ENCODE measurements at regions of chr3 and their contacts with region 1.

Region 1: DNA sequence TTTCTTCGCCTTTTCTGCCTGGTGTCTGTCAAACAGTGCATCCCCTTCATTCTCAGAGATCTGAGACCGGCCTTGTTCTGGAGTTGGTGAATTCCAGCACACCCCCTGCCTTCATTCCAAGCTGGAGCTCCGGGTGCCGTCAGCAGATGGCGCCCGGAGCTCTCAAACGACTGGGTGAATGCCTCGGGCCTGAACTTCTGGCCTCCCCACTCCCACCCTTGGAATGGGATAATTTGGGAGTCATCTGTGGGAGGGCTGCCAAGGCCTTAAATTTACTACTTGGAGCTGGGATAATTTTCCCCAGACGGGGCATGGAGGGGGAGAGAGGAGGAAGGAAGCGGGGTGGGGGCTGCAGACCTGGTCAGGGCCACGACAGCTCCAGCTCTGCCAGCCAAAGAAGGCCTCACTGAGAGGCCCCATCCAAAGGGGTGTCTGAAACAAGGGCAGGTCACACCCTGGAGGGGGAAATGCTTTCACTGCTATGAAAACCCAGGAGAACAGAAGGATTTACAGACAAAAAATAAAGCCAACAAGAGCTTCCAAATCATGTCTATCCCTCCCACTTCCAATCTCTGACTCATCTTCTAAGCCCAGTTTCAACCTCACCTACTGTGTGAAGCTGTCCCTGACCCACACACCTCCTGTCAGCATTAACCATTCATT is 187.9 kb downstream of the OPA1 start:
- DNase-seq: peak; percentile 80 to 87
- H3K4me3 ChIP-seq: no peak overlapping the region
- H3K4me3 Mint-ChIP-seq: peak overlapping the region; percentile 4
- H3K27ac Mint-ChIP-seq: peak overlapping the region; percentile 98
- H3K4me1 ChIP-seq: peaks cover 76% of the 10 kb centered on the region
- H3K4me1 Mint-ChIP-seq: peaks cover 63% of the 10 kb centered on the region
- H3K27me3 ChIP-seq: no peaks in the 10 kb centered on the region
- H3K27me3 Mint-ChIP-seq: no peaks in the 10 kb centered on the region
- CTCF ChIP-seq: peak; percentile 81 to 89

Region 2: GRCh38 chr3:193509103-193509965 is 271.6 kb before region 1 on chr3:
- CTCF ChIA-PET with region 1: no interaction called
- POLR2A ChIA-PET with region 1: no interaction called
- intact Hi-C with region 1: no loop called
- DNase-seq: no peak
- H3K4me3 ChIP-seq: no peak overlapping the region
- H3K4me3 Mint-ChIP-seq: no peak overlapping the region
- H3K27ac Mint-ChIP-seq: peak overlapping the region; percentile 5
- H3K4me1 ChIP-seq: peaks cover 4% of the 10 kb centered on the region; the same call in 1 of the 2 replicates
- H3K4me1 Mint-ChIP-seq: peaks cover 21% of the 10 kb centered on the region
- H3K27me3 ChIP-seq: no peaks in the 10 kb centered on the region
- H3K27me3 Mint-ChIP-seq: no peaks in the 10 kb centered on the region
- CTCF ChIP-seq: no peak

Region 3: GRCh38 chr3:193768070-193768394 is 12.9 kb before region 1 on chr3:
- CTCF ChIA-PET with region 1: no interaction called
- POLR2A ChIA-PET with region 1: no interaction called
- intact Hi-C with region 1: no loop called
- DNase-seq: no peak
- H3K4me3 ChIP-seq: no peak overlapping the region
- H3K4me3 Mint-ChIP-seq: no peak overlapping the region
- H3K27ac Mint-ChIP-seq: no peak overlapping the region
- H3K4me1 ChIP-seq: no peaks in the 10 kb centered on the region
- H3K4me1 Mint-ChIP-seq: no peaks in the 10 kb centered on the region
- H3K27me3 ChIP-seq: no peaks in the 10 kb centered on the region
- H3K27me3 Mint-ChIP-seq: no peaks in the 10 kb centered on the region
- CTCF ChIP-seq: no peak

Region 4: DNA sequence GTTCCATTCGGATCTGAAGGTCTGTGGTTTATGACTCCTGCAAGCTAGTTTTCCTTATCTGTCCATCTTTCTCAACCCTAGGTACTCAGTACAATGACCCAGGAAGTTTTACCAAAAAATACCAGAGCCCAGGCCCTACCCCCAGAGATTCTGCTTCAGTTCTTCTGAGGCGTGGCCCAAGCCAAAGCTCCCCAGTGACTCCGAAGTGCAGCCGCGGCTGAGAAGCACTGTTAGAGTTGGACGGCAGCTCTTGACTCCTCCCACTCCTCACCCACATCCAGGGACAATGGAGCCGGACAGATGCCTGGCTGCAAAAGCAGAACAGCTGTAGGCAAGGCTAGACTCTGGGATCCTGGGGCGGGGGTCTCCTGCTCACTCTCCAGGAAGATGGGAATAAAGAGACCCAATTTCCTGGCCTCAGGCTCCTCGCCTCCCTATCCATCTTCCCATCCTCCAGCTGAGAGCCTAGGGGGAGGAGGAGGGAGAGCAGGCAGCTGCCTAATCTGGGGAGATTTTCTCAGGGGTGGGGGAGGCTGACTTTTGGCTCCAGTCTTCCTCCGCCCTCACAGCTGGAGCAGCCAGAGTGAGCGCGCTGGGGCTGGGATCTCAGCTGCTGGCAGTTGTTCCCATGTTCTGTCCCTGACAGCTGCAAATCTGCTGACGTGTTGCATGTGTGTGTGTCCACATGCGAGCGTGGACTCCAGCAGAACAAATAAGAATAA is 35.8 kb after region 1 on chr3:
- CTCF ChIA-PET with region 1: interaction called, 9 read pairs
- POLR2A ChIA-PET with region 1: interaction called, 8 read pairs
- intact Hi-C with region 1: loop called (anchors 1 kb)
- DNase-seq: peak; percentile 83 to 88
- H3K4me3 ChIP-seq: peak overlapping the region; percentile 9
- H3K4me3 Mint-ChIP-seq: peak overlapping the region; percentile 46
- H3K27ac Mint-ChIP-seq: peak overlapping the region; percentile 45
- H3K4me1 ChIP-seq: peaks cover 54% of the 10 kb centered on the region
- H3K4me1 Mint-ChIP-seq: peaks cover 43% of the 10 kb centered on the region
- H3K27me3 ChIP-seq: no peaks in the 10 kb centered on the region
- H3K27me3 Mint-ChIP-seq: no peaks in the 10 kb centered on the region
- CTCF ChIP-seq: no peak

Region 5: DNA sequence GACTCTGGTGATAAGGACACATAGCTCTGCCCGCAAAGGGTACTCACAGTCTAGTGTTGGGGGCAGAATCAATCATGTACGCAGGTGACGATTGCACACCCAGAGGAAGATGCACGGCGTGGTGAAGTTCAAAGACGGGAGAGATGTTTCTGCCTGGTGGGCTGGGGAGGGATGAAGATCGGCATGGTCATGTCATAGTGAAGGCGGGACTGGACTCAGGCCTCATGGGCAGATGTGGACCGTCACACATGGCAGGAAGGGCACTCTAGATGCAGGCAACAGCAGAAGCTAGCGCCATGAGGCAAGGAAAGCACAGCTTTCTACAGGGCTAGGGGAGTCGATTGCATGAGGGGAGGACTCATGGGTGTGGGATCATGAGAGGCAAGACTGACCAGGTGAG is 52.7 kb after region 1 on chr3:
- CTCF ChIA-PET with region 1: no interaction called
- POLR2A ChIA-PET with region 1: no interaction called
- intact Hi-C with region 1: no loop called
- DNase-seq: no peak
- H3K4me3 ChIP-seq: no peak overlapping the region
- H3K4me3 Mint-ChIP-seq: no peak overlapping the region
- H3K27ac Mint-ChIP-seq: no peak overlapping the region
- H3K4me1 ChIP-seq: peaks cover 33% of the 10 kb centered on the region
- H3K4me1 Mint-ChIP-seq: peaks cover 25% of the 10 kb centered on the region
- H3K27me3 ChIP-seq: no peaks in the 10 kb centered on the region
- H3K27me3 Mint-ChIP-seq: no peaks in the 10 kb centered on the region
- CTCF ChIP-seq: no peak

Region 6: DNA sequence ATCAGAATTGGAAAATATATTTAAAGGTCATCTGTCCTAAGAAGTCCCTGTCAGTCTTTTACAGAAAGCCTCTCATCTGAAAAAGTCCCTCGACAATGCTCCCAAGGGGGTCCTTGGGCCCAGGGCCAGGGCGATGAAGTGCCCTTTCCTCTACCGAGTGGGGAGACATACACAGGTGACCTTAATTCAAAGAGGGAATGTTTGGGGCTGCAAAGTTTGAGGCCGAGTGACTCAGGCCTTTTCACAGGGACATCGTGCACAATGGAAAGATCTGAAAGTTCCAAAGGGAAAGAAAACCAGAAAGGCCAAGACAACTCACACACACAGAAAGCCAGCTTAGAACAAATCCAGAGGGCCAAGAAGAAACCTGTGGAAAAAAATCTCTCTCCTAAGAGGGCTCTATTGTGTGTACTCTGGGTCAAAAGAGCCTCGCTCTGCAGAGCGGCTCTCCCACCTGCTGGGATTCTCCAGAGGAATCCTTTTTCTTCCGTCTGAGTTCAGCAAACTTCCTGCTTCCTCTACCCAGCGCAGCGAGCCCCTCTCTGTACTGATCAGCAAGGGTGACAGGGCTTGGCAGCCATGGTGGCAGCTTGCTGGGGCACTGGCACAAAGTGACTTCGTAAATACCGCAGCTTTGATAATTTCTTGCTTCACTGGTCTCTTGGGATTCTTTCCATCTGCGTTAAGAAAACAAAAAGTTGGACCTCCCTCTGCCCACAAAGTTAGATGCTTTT is 71.2 kb after region 1 on chr3:
- CTCF ChIA-PET with region 1: no interaction called
- POLR2A ChIA-PET with region 1: no interaction called
- intact Hi-C with region 1: loop called (anchors 1 kb)
- DNase-seq: no peak
- H3K4me3 ChIP-seq: no peak overlapping the region
- H3K4me3 Mint-ChIP-seq: peak overlapping the region; percentile 20
- H3K27ac Mint-ChIP-seq: peak overlapping the region; percentile 84
- H3K4me1 ChIP-seq: peaks cover 56% of the 10 kb centered on the region
- H3K4me1 Mint-ChIP-seq: peaks cover 40% of the 10 kb centered on the region
- H3K27me3 ChIP-seq: no peaks in the 10 kb centered on the region
- H3K27me3 Mint-ChIP-seq: no peaks in the 10 kb centered on the region
- CTCF ChIP-seq: no peak

Region 7: GRCh38 chr3:193910886-193911738 is 130.2 kb after region 1 on chr3:
- CTCF ChIA-PET with region 1: interaction called, 9 read pairs
- POLR2A ChIA-PET with region 1: interaction called, 11 read pairs
- intact Hi-C with region 1: loop called (anchors 1 kb)
- DNase-seq: peak; percentile 75 to 90
- H3K4me3 ChIP-seq: peak overlapping the region; percentile 37
- H3K4me3 Mint-ChIP-seq: peak overlapping the region; percentile 74
- H3K27ac Mint-ChIP-seq: peak overlapping the region; percentile 90
- H3K4me1 ChIP-seq: peaks cover 66% of the 10 kb centered on the region
- H3K4me1 Mint-ChIP-seq: peaks cover 40% of the 10 kb centered on the region
- H3K27me3 ChIP-seq: no peaks in the 10 kb centered on the region
- H3K27me3 Mint-ChIP-seq: no peaks in the 10 kb centered on the region
- CTCF ChIP-seq: no peak

Region 8: DNA sequence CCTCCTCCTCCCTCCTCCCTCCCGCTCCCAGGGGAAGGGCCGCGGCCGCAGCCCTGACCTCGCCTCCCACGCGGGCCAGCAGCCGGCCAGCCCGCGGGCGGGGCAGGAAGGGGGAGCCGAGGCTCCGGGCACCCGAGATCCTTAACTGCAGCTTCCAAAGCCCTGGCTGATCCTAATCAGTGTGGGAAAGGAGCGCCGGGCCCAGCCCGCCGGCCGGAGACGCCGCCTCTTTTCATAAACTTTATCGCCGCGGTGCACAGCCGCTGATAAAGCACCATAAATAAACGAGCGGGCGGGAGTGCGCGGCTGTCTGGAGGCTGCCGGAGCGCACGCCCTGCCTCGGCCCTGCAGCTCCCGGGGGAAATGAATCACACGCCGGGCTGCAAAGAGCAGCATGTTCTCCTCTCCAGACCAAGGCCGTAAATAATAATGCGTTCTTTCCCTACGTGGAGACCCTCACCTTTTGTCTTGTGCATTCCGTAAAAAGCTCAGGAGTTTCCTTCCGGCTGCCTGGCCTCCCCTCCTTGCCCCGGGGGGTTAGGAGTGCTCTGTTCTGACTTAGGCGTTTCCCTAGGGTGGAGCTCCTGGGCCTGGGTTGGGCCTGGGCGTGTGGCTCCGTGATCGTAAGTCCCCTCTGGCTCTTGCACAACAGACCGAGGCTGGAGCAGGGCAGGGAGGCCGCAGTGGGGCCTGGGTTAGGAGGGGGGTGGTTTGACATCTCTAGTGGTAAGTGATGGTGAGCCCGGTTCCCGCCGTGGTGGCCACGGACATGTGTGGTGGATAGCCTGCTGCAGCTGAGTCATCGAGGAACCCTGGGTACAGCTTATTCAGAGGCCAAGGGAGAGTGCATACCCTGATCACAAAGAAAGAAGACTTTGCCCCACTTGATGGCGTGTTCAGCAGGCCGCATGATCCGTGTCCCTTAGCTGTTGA is 222.4 kb after region 1 on chr3:
- CTCF ChIA-PET with region 1: interaction called, 7 read pairs
- POLR2A ChIA-PET with region 1: interaction called, 4 read pairs
- intact Hi-C with region 1: loop called (anchors 1 kb)
- DNase-seq: peak; percentile 87 to 94
- H3K4me3 ChIP-seq: peak overlapping the region; percentile 35
- H3K4me3 Mint-ChIP-seq: peak overlapping the region; percentile 76
- H3K27ac Mint-ChIP-seq: peak overlapping the region; percentile 81
- H3K4me1 ChIP-seq: peaks cover 42% of the 10 kb centered on the region
- H3K4me1 Mint-ChIP-seq: peaks cover 29% of the 10 kb centered on the region
- H3K27me3 ChIP-seq: no peaks in the 10 kb centered on the region
- H3K27me3 Mint-ChIP-seq: no peaks in the 10 kb centered on the region
- CTCF ChIP-seq: no peak

Region 9: GRCh38 chr3:194141415-194142155 is 360.6 kb after region 1 on chr3:
- CTCF ChIA-PET with region 1: interaction called, 10 read pairs
- POLR2A ChIA-PET with region 1: interaction called, 11 read pairs
- intact Hi-C with region 1: loop called (anchors 1 kb)
- DNase-seq: peak; percentile 90 to 91
- H3K4me3 ChIP-seq: peak overlapping the region; percentile 63
- H3K4me3 Mint-ChIP-seq: peak overlapping the region; percentile 88
- H3K27ac Mint-ChIP-seq: peak overlapping the region; percentile 78
- H3K4me1 ChIP-seq: peaks cover 30% of the 10 kb centered on the region
- H3K4me1 Mint-ChIP-seq: peaks cover 13% of the 10 kb centered on the region
- H3K27me3 ChIP-seq: no peaks in the 10 kb centered on the region
- H3K27me3 Mint-ChIP-seq: no peaks in the 10 kb centered on the region
- CTCF ChIP-seq: peak in 1 of 2 experiments; percentile 4

Measured in Caco-2 (cell line).